B cell (primary cell): ENCODE measurements at regions of chr4 and their contacts with region 1.

Region 1: DNA sequence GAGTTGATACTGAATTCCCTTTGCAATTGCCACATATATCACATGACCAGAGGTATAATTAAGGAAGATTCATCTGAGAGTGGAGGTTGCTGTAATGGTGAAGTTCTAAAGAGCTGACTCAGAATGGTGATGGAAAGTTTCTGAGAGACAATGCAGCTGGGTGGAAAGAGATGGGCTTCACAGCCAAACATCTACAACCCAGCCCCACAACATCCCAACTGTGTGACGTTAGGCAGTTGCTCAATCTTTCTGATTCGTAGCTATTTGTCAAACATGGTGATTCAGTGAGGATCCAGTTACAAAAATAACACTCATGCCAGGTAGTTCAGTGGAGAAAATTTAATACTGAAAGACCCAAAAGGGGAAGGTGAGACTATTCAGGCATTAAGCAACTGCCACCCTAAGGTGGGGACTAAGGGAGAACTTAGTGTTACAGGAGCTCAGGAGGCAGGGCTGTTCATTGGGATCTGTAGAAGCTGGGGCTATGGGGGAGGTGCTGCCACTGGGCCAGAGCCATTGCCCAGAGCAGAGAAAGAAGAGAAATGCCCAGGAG is 6.9 kb upstream of the AFF1 start:
- DNase-seq: no peak
- ATAC-seq: no peak
- H3K4me3 ChIP-seq: no peak overlapping the region
- H3K4me3 Mint-ChIP-seq: no peak overlapping the region
- H3K27ac ChIP-seq: no peak overlapping the region
- H3K27ac Mint-ChIP-seq: no peak overlapping the region
- H3K4me1 ChIP-seq: peaks cover 10 to 13% of the 10 kb centered on the region in 2 donors
- H3K4me1 Mint-ChIP-seq: peaks cover 14% of the 10 kb centered on the region
- H3K27me3 ChIP-seq: no peaks in the 10 kb centered on the region
- H3K27me3 Mint-ChIP-seq: no peaks in the 10 kb centered on the region
- CTCF ChIP-seq: no peak

Region 2: GRCh38 chr4:84920617-84921016 is 2007.3 kb before region 1 on chr4:
- CTCF ChIA-PET with region 1: no interaction called
- POLR2A ChIA-PET with region 1: no interaction called
- intact Hi-C with region 1: no loop called
- DNase-seq: no peak
- ATAC-seq: no peak
- H3K4me3 ChIP-seq: no peak overlapping the region
- H3K4me3 Mint-ChIP-seq: no peak overlapping the region
- H3K27ac ChIP-seq: no peak overlapping the region
- H3K27ac Mint-ChIP-seq: no peak overlapping the region
- H3K4me1 ChIP-seq: no peaks in the 10 kb centered on the region
- H3K4me1 Mint-ChIP-seq: no peaks in the 10 kb centered on the region
- H3K27me3 ChIP-seq: peaks cover 0 to 4% (median 0%) of the 10 kb centered on the region in 4 experiments
- H3K27me3 Mint-ChIP-seq: peaks cover 4% of the 10 kb centered on the region
- CTCF ChIP-seq: no peak

Region 3: DNA sequence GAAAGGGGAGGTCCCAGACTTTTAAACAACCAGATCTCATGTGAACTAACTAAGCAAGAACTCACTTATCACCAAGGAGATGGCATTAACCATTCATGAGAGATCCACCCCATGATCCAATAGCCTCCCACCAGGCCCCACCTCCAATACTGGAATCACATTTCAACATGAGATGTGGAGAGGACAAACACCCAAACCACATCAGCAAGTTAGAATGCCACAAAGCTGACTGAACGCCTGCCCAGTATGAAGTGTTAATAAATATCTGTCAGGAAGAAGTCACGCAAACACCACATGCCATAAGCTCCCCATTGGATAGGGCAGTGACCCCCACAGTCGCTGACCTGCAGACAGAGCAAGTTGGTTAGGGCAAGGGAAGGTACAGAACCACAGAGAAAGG is 93.0 kb before region 1 on chr4:
- CTCF ChIA-PET with region 1: no interaction called
- POLR2A ChIA-PET with region 1: no interaction called
- intact Hi-C with region 1: no loop called
- DNase-seq: no peak
- ATAC-seq: no peak
- H3K4me3 ChIP-seq: no peak overlapping the region
- H3K4me3 Mint-ChIP-seq: no peak overlapping the region
- H3K27ac ChIP-seq: no peak overlapping the region
- H3K27ac Mint-ChIP-seq: no peak overlapping the region
- H3K4me1 ChIP-seq: no peaks in the 10 kb centered on the region
- H3K4me1 Mint-ChIP-seq: no peaks in the 10 kb centered on the region
- H3K27me3 ChIP-seq: no peaks in the 10 kb centered on the region
- H3K27me3 Mint-ChIP-seq: peaks cover 3% of the 10 kb centered on the region
- CTCF ChIP-seq: no peak

Region 4: GRCh38 chr4:86908251-86908657 is 19.7 kb before region 1 on chr4:
- CTCF ChIA-PET with region 1: interaction called, 44 read pairs
- POLR2A ChIA-PET with region 1: no interaction called
- intact Hi-C with region 1: no loop called
- DNase-seq: peak; percentile 50
- ATAC-seq: peak; percentile 24
- H3K4me3 ChIP-seq: no peak overlapping the region
- H3K4me3 Mint-ChIP-seq: peak overlapping the region; percentile 60
- H3K27ac ChIP-seq: no peak overlapping the region
- H3K27ac Mint-ChIP-seq: peak overlapping the region; percentile 22
- H3K4me1 ChIP-seq: peaks cover 28 to 36% of the 10 kb centered on the region in 2 donors
- H3K4me1 Mint-ChIP-seq: peaks cover 32% of the 10 kb centered on the region
- H3K27me3 ChIP-seq: peaks cover 0 to 4% (median 0%) of the 10 kb centered on the region in 4 experiments
- H3K27me3 Mint-ChIP-seq: peaks cover 4% of the 10 kb centered on the region
- CTCF ChIP-seq: no peak